Activated naive CD4-positive, alpha-beta T cell treated with anti-CD3 and anti-CD28 coated beads, Interleukin-2, amount 10 ng/mL, durations not matched to agents 7 days and 5 days (primary cell): ENCODE measurements at regions of chr19 and their contacts with region 1.

Region 1: DNA sequence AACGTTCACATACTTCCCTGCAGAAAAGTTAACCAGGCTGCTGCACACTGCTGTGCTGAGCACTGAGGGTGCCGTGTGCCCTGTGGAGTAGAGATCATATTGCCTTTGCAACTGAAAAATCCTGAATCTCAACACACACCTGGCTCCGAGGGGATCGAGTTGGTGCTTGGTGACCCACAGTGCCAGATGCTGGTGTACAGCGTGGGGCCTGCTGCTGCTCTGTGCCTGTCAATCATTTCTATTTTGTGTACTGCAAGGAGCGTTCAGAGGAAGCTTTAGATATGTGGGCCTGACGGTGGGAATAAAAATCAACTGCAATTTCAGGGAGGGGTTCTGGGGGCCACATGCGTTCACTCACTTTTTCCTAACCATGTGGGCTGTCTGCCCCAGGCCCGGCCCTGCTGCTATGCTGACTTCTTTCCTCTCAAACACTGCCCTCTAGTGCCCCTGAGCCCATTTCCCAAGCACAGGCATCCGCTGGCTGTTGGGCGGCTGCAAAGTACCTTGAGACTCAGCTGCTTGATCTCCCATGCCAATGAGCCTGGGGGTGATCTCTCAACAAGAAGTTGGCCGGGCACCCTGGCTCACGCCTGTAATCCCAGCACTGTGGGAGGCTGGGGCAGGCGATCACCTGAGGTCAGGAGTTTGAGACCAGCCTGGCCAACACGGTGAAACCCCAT is 9.7 kb upstream of the LENG8 start:
- DNase-seq: peak; percentile 52
- H3K4me3 Mint-ChIP-seq: no peak overlapping the region
- H3K27ac Mint-ChIP-seq: no peak overlapping the region
- H3K4me1 Mint-ChIP-seq: peaks cover 13% of the 10 kb centered on the region
- H3K27me3 Mint-ChIP-seq: no peaks in the 10 kb centered on the region

Region 2: GRCh38 chr19:54179921-54180461 is 259.3 kb before region 1 on chr19:
- CTCF ChIA-PET with region 1: no interaction called
- DNase-seq: no peak
- H3K4me3 Mint-ChIP-seq: no peak overlapping the region
- H3K27ac Mint-ChIP-seq: no peak overlapping the region
- H3K4me1 Mint-ChIP-seq: no peaks in the 10 kb centered on the region
- H3K27me3 Mint-ChIP-seq: no peaks in the 10 kb centered on the region

Region 3: DNA sequence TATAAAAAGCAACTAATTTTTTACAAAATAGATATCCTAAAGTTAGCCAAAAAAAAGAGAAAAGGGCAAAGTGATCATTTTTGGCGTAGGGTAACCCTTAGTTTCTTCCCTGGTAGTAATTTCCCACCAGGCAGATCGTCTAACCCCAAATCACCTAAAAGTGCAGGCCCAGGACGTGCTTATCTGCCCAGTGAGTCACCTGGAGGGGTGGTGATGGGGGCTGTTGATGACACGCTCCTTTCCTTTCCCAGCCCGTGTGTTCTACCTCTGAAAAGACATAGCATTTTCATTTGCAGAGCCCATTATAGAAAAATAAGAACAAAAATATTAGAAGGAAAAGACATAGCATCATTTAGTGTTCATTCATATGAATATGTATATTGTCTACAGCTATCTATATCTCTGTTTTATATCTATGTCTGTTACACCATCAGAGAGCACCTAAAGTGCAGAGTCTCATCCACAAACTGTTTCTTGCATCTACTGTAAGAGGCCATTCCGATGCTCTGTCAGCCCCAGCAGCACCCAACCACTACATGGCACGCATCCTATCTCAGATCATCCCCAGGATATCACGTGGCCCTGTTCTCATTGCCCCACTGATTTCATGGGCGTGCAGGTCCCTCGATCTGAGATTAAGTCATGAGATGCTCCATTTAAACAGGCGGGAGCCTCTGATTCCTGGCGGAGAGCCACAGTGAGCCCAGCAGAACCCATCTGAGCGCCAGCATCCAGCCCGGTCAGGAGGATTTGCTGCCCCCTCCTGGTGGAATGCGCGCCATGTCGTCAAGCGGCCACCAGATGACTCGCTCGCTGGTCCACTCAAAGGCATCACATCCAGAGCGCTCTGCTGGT is 208.0 kb before region 1 on chr19:
- CTCF ChIA-PET with region 1: no interaction called
- DNase-seq: peak; percentile 90
- H3K4me3 Mint-ChIP-seq: no peak overlapping the region
- H3K27ac Mint-ChIP-seq: no peak overlapping the region
- H3K4me1 Mint-ChIP-seq: peaks cover 3% of the 10 kb centered on the region
- H3K27me3 Mint-ChIP-seq: peaks cover 56% of the 10 kb centered on the region

Region 4: GRCh38 chr19:54420383-54421168 is 18.7 kb before region 1 on chr19:
- CTCF ChIA-PET with region 1: interaction called, 10 read pairs
- DNase-seq: no peak
- H3K4me3 Mint-ChIP-seq: no peak overlapping the region
- H3K27ac Mint-ChIP-seq: no peak overlapping the region
- H3K4me1 Mint-ChIP-seq: peaks cover 15% of the 10 kb centered on the region
- H3K27me3 Mint-ChIP-seq: peaks cover 65% of the 10 kb centered on the region